ENCODE measurements at regions of chr22 and their contacts with region 1.

Region 1: GRCh38 chr22:24768537-24769374 is 5.8 kb downstream of the PIWIL3 start:
- DNase-seq: peak in 9 of 10 donors; percentile 34 to 91 (median 62)

Region 2: DNA sequence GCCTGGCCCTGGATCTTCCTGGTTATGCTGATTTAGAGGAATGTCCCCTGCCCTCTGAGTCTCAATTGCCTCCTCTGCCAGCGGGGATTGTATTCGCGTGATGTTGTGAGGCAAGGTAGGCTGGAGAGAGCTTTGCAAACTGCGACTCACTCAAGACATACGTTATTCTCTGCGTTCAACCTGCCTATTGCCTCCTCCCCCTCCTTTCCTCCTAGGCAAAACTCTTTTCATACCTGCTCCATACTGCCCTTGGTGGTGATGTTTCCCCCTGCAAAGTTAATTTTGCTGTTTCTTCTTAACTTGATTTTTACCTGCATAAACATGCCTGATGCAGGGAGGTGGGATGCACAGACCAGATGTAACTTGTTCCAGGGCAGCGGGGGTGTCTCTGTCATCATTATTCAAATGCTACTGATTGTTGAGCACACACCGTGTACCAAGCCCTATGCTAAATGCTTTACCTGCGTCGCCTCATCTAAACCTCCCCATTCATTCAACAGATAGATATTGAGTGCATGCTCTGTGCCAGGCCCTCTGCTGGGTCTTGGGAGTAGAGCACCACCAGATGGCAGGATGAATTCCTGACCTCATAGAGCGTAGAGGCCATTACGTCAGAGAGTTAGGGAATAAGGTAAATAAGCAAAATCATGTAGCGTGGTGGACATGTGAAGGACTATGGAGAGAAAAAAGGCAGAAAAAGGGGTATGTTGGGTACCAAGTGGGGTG is 66.3 kb after region 1 on chr22:
- intact Hi-C with region 1: loop called (anchors 5 kb)
- DNase-seq: no peak

Region 3: GRCh38 chr22:24845041-24845898 is 76.5 kb after region 1 on chr22:
- intact Hi-C with region 1: loop called (anchors 1 kb)
- DNase-seq: peak in 1 of 10 donors; percentile 67

Region 4: GRCh38 chr22:25057013-25057881 is 288.5 kb after region 1 on chr22:
- intact Hi-C with region 1: loop called (anchors 10 kb)
- DNase-seq: peak; percentile 55 to 94 (median 78)

Measured in posterior cingulate gyrus (tissue), 11 donors.